Activated CD4-positive, alpha-beta T cell treated with anti-CD3 and anti-CD28 coated beads for 36 hours (primary cell): ENCODE measurements at regions of chr19 and their contacts with region 1.

Region 1: GRCh38 chr19:49590071-49590970 is 661 bp upstream of the PRR12 start:
- DNase-seq: peak; percentile 98
- ATAC-seq: peak; percentile 80
- H3K4me3 Mint-ChIP-seq: peak overlapping the region; percentile 79
- H3K27ac Mint-ChIP-seq: peak overlapping the region; percentile 84
- H3K4me1 Mint-ChIP-seq: peaks cover 28% of the 10 kb centered on the region
- H3K27me3 Mint-ChIP-seq: no peaks in the 10 kb centered on the region

Region 2: DNA sequence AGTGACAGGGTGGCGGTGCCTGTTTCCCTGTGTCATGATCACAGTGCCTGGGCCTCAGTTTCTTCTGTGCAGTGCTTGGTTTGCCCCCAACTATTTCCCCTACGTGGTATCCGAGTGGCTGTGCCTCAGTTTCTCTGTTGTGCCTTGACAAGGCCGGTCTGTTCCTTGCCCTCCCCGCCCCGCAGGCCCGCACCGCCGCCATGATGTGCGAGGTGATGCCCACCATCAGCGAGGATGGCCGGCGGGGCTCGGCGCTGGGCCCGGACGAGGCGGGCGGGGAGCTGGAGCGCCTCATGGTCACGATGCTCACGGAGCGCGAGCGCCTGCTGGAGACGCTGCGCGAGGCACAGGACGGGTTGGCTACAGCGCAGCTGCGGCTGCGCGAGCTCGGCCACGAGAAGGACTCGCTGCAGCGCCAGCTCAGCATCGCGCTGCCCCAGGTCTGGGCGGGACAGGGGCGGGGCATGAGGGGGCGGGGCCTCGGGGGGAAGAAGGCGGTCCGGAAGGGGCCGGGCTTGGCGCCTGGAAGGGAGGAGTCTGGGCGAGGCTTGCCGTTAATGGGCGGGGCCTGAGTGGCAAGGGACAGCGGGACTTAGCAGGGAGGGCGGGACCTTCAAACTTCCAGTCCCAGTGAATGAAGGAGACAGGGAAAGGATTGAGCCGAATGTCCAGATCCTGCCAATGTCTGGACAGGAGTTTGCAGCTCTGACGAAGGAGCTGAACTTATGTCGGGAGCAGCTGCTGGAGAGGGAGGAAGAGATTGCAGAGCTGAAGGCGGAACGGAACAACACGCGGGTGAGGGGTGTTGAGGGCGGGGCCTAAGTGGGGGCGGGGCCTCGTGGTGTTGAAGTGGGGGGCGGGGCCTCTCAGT is 462.4 kb before region 1 on chr19:
- CTCF ChIA-PET with region 1: no interaction called
- POLR2A ChIA-PET with region 1: no interaction called
- intact Hi-C with region 1: loop called in 1 of 2 experiments (anchors 1 kb)
- DNase-seq: peak; percentile 98
- ATAC-seq: peak; percentile 95
- H3K4me3 Mint-ChIP-seq: peak overlapping the region; percentile 76
- H3K27ac Mint-ChIP-seq: peak overlapping the region; percentile 92
- H3K4me1 Mint-ChIP-seq: peaks cover 11% of the 10 kb centered on the region
- H3K27me3 Mint-ChIP-seq: no peaks in the 10 kb centered on the region

Region 3: GRCh38 chr19:49451430-49452181 is 138.7 kb before region 1 on chr19 and contains the start of gene PIH1D1:
- CTCF ChIA-PET with region 1: no interaction called
- POLR2A ChIA-PET with region 1: interaction called, 8 read pairs
- intact Hi-C with region 1: loop called in 1 of 2 experiments (anchors 1 kb)
- DNase-seq: peak; percentile 98
- ATAC-seq: peak; percentile 71
- H3K4me3 Mint-ChIP-seq: peak within 1 kb of the TSS; percentile 100
- H3K27ac Mint-ChIP-seq: peak within 1 kb of the TSS; percentile 100
- H3K4me1 Mint-ChIP-seq: peaks cover 50% of the 10 kb centered on the region
- H3K27me3 Mint-ChIP-seq: no peaks in the 10 kb centered on the region
- total RNA-seq, gene PIH1D1: 117 to 138 TPM

Region 4: GRCh38 chr19:49565261-49565660 is 25.1 kb before region 1 on chr19:
- CTCF ChIA-PET with region 1: interaction called, 3 read pairs
- POLR2A ChIA-PET with region 1: no interaction called
- intact Hi-C with region 1: loop called in 1 of 2 experiments (anchors 2 kb)
- DNase-seq: peak; percentile 18
- ATAC-seq: no peak
- H3K4me3 Mint-ChIP-seq: peak overlapping the region; percentile 24
- H3K27ac Mint-ChIP-seq: peak overlapping the region; percentile 95
- H3K4me1 Mint-ChIP-seq: peaks cover 83% of the 10 kb centered on the region
- H3K27me3 Mint-ChIP-seq: no peaks in the 10 kb centered on the region

Region 5: GRCh38 chr19:49712397-49712859 is 122.1 kb after region 1 on chr19:
- CTCF ChIA-PET with region 1: no interaction called
- POLR2A ChIA-PET with region 1: no interaction called
- intact Hi-C with region 1: no loop called
- DNase-seq: no peak
- ATAC-seq: no peak
- H3K4me3 Mint-ChIP-seq: no peak overlapping the region
- H3K27ac Mint-ChIP-seq: no peak overlapping the region
- H3K4me1 Mint-ChIP-seq: peaks cover 6% of the 10 kb centered on the region
- H3K27me3 Mint-ChIP-seq: no peaks in the 10 kb centered on the region

Region 6: GRCh38 chr19:49817964-49818648 is 227.8 kb after region 1 on chr19 and contains the start of gene MED25:
- CTCF ChIA-PET with region 1: no interaction called
- POLR2A ChIA-PET with region 1: no interaction called
- intact Hi-C with region 1: loop called in 1 of 2 experiments (anchors 1 kb)
- DNase-seq: peak; percentile 91
- ATAC-seq: peak; percentile 75
- H3K4me3 Mint-ChIP-seq: peak within 1 kb of the TSS; percentile 87
- H3K27ac Mint-ChIP-seq: peak within 1 kb of the TSS; percentile 99
- H3K4me1 Mint-ChIP-seq: peaks cover 26% of the 10 kb centered on the region
- H3K27me3 Mint-ChIP-seq: no peaks in the 10 kb centered on the region
- total RNA-seq, gene MED25: 39.6 to 49.9 TPM